Sigmoid colon (tissue), 7 donors: ENCODE measurements at regions of chr2 and their contacts with region 1.

Region 1: DNA sequence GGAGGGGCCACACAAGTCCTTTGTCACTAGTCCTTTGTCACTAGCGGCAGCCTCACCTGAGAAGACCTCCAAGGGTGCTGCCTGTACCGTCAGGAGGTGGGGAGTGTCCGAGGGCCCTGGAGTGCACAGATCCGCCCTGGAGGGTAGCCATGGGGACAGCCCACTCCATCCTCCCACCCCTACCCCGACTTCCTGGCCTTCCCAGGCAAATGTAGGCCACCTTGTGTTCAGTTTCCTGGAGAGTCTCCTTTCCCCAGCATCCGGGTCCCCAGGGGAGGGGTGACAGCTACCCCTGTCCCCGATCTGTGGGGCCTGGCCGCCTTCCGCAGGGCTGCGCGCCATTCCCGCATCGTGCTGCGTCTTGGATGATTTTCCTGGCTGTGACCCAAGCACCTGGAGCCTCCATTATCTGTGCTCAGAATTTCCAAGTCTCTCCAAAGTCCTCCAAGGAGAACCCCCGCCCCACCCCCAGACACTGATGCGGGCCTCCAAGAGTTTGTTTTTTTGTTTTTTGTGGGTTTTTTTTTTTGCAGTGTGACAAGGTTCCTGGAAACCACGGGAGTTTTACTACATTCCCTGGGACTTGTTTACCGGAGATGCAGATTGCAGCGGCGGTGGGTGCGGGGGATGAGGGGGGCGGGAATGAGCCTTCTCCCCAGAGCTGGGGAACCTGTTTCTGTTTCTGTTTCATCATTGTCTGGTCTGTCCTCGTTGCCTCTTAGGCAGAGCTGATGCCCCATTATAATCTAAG is 28.6 kb downstream of the TEX44 start:
- DNase-seq: peak; percentile 83
- H3K4me3 ChIP-seq: peak overlapping the region in 3 of 4 donors; percentile 28 to 44 (median 36)
- H3K27ac ChIP-seq: peak overlapping the region; percentile 35 to 83 (median 78)
- H3K4me1 ChIP-seq: peaks cover 0 to 31% (median 26%) of the 10 kb centered on the region in 4 donors
- H3K27me3 ChIP-seq: no peaks in the 10 kb centered on the region
- CTCF ChIP-seq: no peak
- EP300 ChIP-seq: no peak
- POLR2A ChIP-seq: no peak

Region 2: DNA sequence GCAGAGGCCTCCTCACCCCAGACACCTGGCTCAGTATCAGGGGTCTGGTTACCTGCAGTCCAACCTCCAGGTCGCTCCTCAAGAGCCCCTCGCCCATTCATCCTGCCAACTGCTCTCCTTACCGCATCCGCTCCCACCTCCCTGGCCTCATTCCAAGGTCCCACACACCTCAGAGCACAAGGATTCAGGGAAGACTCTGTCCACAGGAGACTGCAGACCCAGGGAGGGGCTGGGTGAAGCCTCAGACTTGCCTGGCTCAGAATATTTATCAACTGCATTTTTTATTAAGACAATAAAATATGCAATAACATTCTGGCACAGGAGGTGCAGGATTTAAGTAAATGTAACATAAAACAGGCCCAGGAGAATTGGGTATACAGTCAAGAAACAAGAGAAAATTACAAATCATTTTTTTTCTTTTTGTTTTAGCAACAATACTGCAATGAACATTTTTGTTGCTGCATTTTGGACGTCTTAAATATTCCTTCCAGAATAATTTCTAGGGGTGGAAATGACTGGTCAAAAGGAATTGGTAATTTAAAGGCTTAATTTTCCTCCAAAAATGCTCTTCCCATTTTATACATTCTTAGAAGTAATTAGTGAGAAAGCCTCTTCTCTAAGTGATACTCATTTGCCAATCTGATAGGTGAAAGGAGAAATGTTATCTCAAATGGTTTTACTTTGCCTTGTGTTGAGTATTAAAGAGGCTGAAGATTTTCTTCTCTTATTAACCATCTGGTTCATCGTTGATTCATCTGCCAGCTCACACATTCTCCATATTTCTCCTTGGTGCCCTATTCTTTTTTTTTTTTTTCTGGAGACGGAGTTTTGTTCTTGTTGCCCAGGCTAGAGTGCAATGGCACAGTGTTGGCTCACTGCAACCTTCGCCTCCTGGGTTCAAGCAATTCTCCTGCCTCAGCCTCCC is 13.9 kb after region 1 on chr2:
- intact Hi-C with region 1: loop called (anchors 2 kb)
- DNase-seq: no peak
- H3K4me3 ChIP-seq: no peak overlapping the region
- H3K27ac ChIP-seq: peak overlapping the region; percentile 41 to 64 (median 50)
- H3K4me1 ChIP-seq: peaks cover 0 to 21% (median 11%) of the 10 kb centered on the region in 4 donors
- H3K27me3 ChIP-seq: no peaks in the 10 kb centered on the region
- CTCF ChIP-seq: no peak
- EP300 ChIP-seq: no peak
- POLR2A ChIP-seq: no peak

Region 3: GRCh38 chr2:232901736-232902578 is 1280.7 kb after region 1 on chr2:
- intact Hi-C with region 1: no loop called
- DNase-seq: no peak
- H3K4me3 ChIP-seq: no peak overlapping the region
- H3K27ac ChIP-seq: no peak overlapping the region
- H3K4me1 ChIP-seq: no peaks in the 10 kb centered on the region
- H3K27me3 ChIP-seq: peaks cover 0 to 27% (median 0%) of the 10 kb centered on the region in 3 donors
- CTCF ChIP-seq: no peak
- EP300 ChIP-seq: no peak
- POLR2A ChIP-seq: no peak